Ascending aorta (tissue), 2 donors: ENCODE measurements at regions of chr14 and their contacts with region 1.

Region 1: GRCh38 chr14:30641207-30641606 is 19.1 kb downstream of the SCFD1 start:
- DNase-seq: no peak
- H3K4me3 ChIP-seq: no peak overlapping the region
- H3K27ac ChIP-seq: no peak overlapping the region
- H3K4me1 ChIP-seq: no peaks in the 10 kb centered on the region
- H3K27me3 ChIP-seq: no peaks in the 10 kb centered on the region
- CTCF ChIP-seq: no peak

Region 2: GRCh38 chr14:30462358-30462757 is 178.8 kb before region 1 on chr14:
- intact Hi-C with region 1: no loop called
- DNase-seq: no peak
- H3K4me3 ChIP-seq: no peak overlapping the region
- H3K27ac ChIP-seq: no peak overlapping the region
- H3K4me1 ChIP-seq: no peaks in the 10 kb centered on the region
- H3K27me3 ChIP-seq: no peaks in the 10 kb centered on the region
- CTCF ChIP-seq: no peak

Region 3: DNA sequence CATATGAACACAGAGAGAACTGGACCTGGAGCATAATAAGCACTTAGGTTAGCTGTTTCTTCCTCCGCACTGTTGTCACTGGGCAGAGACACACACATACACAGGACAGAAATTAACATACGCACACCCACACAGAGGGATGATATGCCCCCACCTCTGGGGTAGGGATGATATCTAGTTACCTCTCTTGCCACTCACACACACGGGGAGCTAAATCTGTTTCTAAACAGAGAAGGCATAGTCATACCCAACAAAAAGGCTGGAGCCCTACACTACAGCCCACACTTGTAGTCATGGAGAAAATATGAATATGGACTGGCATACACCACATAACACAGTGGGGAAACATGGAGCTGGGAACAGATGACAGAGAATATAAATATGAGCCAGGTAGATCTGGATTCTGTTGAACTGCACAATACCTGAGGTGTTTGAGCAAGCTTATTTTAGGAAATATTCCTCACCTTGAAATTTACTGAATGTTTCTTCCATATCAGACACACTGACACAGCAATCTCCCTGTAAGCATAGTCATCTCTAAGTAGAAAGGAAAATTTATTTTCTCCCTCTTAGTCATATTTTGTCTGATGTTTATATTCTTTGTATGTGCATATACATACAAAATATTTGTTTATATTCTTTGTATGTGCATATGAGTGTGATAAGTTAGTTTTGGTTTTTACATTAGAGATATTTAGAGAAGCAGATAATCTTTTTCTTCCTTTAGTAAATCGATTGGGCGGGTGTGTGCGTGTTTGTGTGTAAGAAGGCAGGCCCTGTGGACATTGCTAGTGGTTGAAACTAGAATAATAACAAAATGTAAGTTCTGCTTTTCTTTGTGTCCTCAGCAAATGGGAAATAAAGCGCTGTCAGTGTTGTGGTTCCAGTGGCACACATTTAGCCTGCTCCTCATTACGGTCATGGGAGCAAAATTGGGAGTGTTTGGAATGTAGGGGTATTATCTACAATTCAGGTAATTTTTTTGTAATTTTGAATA is 40.0 kb before region 1 on chr14:
- intact Hi-C with region 1: no loop called
- DNase-seq: no peak
- H3K4me3 ChIP-seq: no peak overlapping the region
- H3K27ac ChIP-seq: no peak overlapping the region
- H3K4me1 ChIP-seq: no peaks in the 10 kb centered on the region
- H3K27me3 ChIP-seq: no peaks in the 10 kb centered on the region
- CTCF ChIP-seq: no peak

Region 4: GRCh38 chr14:30861200-30861599 is 220.0 kb after region 1 on chr14:
- intact Hi-C with region 1: loop called (anchors 5 kb)
- DNase-seq: no peak
- H3K4me3 ChIP-seq: no peak overlapping the region
- H3K27ac ChIP-seq: no peak overlapping the region
- H3K4me1 ChIP-seq: no peaks in the 10 kb centered on the region
- H3K27me3 ChIP-seq: no peaks in the 10 kb centered on the region
- CTCF ChIP-seq: no peak